Gastrocnemius medialis (tissue), 4 donors: ENCODE measurements at regions of chr21 and their contacts with region 1.

Region 1: DNA sequence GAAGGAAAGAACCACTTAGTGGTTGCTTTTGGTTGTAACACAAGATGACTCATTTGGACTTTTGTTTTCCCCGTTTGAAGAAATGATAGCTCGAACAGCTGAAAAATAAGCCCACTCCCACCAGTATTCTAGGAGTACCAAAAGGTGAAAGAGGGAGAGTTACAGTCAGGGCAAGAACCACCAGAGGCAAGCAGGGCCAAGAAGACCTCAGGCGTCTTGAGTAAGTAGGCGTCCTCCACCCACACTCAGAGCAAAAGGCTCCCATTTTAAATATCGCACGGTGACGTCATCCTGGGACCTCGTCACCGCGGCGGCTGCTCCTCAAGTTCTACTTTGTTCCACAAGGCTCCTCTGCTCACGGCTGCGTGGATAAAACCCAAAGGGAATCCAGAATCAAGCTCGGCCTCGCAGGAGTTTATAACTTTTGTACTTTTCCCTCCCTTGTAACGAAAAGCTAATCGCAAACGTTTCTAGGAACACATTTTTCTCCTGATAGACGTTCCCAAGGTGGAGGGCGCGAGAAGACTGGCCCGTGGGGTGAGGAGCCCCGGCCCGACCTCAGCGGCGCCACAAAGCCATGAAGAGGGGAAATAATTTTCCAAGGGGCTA is 1.2 kb downstream of the BTG3 start:
- DNase-seq: peak; percentile 57
- ATAC-seq: peak; percentile 65 to 71
- H3K4me3 ChIP-seq: peak overlapping the region; percentile 62 to 71 (median 67)
- H3K27ac ChIP-seq: peak overlapping the region; percentile 70 to 84 (median 80)
- H3K4me1 ChIP-seq: peaks cover 0 to 9% of the 10 kb centered on the region in 2 donors
- H3K27me3 ChIP-seq: peaks cover 8 to 26% (median 11%) of the 10 kb centered on the region in 3 donors
- CTCF ChIP-seq: peak in 1 of 5 experiments; percentile 14
- POLR2A ChIP-seq: peak; percentile 38 to 62

Region 2: DNA sequence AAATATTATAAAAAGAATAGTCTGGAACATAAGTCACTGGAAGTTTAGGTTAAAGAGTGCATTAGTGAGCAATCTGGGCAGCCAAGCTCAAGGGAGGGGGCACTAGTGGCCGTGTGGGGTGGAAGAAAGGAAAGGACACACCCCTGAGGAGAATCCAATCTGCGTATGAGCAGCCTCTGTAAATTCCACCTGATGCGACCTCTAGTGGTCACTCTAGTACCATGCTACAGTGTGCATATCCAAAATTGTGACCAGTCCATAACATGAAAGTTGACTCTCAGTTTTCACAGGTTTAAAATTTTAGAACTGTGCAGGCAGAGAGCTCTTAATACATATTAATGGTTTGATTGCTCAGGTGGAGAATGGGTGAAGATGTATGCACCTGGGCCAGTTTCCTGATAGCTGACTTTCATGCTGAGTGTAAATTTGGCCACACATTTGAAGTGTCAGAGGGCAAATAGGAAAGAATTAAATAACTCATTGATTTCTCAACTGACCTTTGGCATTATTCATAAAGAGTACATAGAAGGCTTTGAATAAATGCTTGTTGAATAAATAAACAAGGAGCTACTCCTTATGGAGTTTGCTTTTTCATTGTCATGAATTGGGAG is 313.6 kb after region 1 on chr21:
- in situ Hi-C with region 1: no loop called
- intact Hi-C with region 1: loop called (anchors 10 kb)
- DNase-seq: peak in 1 of 2 donors; percentile 25
- ATAC-seq: peak; percentile 81 to 92
- H3K4me3 ChIP-seq: no peak overlapping the region
- H3K27ac ChIP-seq: no peak overlapping the region
- H3K4me1 ChIP-seq: no peaks in the 10 kb centered on the region
- H3K27me3 ChIP-seq: no peaks in the 10 kb centered on the region
- CTCF ChIP-seq: peak; percentile 25 to 79 (median 64)
- POLR2A ChIP-seq: no peak